ENCODE measurements at regions of chr17 and their contacts with region 1.

Region 1: DNA sequence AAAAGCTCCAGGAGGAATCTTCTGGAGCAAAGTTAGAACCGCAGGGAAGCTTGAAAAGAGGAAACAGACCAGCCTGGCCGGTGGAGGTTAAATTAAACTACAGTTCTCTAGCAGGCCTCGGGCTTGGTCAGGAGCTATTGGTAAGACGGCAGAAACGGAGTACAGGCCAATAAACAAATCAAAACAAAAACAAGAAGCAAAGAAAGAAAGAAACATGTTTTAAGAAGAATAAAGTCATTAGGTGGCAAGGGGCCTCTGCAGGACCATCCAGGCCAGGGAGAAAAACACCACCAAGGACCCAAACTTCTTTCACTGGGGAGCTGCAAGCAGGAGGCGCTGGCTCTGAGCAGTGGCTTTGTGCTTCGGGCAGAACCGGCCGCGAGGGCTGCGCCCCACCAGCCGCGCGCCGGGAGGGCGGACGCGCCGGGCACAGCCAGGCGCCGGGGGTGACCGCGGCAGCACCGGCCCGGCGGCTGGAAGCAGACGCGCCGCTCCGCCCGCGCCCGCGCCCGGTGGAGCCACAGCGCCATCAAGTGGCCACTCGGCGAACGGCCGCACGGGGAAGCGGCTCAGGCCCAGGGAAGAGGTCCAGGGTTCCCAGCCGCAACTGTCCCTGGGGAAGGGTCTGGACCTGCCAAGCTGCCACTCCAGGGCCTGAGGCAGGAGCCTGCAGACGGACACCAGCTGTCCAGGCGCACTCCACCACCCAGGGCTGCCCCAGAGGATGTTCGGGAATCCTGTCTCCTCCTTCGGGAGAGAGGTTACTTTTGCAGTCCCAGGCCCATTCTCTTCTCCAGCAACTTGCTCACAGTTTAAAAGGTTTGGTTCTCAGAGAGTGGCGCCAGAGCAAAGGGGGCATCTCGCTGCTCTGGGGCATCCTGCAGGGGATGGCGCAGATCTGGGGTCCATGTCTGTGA is 419.4 kb downstream of the SOX9 start:
- DNase-seq: peak; percentile 75 to 84 (median 80)
- ATAC-seq: peak; percentile 97
- H3K4me3 ChIP-seq: no peak overlapping the region
- H3K27ac ChIP-seq: peak overlapping the region in 3 of 4 donors; percentile 67 to 70 (median 70)
- H3K4me1 ChIP-seq: peaks cover 12% of the 10 kb centered on the region
- H3K27me3 ChIP-seq: no peaks in the 10 kb centered on the region
- CTCF ChIP-seq: peak; percentile 64 to 99 (median 98)
- POLR2A ChIP-seq: peak in 2 of 3 donors; percentile 23 to 26

Region 2: GRCh38 chr17:71118039-71118438 is 1422.2 kb before region 1 on chr17:
- intact Hi-C with region 1: loop called (anchors 10 kb)
- DNase-seq: peak; percentile 24 to 59 (median 42)
- ATAC-seq: peak; percentile 50
- H3K4me3 ChIP-seq: no peak overlapping the region
- H3K27ac ChIP-seq: no peak overlapping the region
- H3K4me1 ChIP-seq: no peaks in the 10 kb centered on the region
- H3K27me3 ChIP-seq: no peaks in the 10 kb centered on the region
- CTCF ChIP-seq: peak; percentile 25 to 86 (median 83)
- POLR2A ChIP-seq: no peak

Region 3: GRCh38 chr17:71472809-71473789 is 1067.1 kb before region 1 on chr17:
- intact Hi-C with region 1: loop called (anchors 5 kb)
- DNase-seq: peak; percentile 22 to 48 (median 34)
- ATAC-seq: peak; percentile 71
- H3K4me3 ChIP-seq: no peak overlapping the region
- H3K27ac ChIP-seq: no peak overlapping the region
- H3K4me1 ChIP-seq: peaks cover 5% of the 10 kb centered on the region
- H3K27me3 ChIP-seq: no peaks in the 10 kb centered on the region
- CTCF ChIP-seq: peak; percentile 53 to 81 (median 71)
- POLR2A ChIP-seq: no peak

Region 4: GRCh38 chr17:72120642-72121163 is 419.5 kb before region 1 on chr17 and contains the start of gene SOX9:
- intact Hi-C with region 1: loop called (anchors 10 kb)
- DNase-seq: peak; percentile 94 to 97 (median 96)
- ATAC-seq: peak; percentile 88
- H3K4me3 ChIP-seq: peak within 1 kb of the TSS; percentile 70 to 79
- H3K27ac ChIP-seq: peak within 1 kb of the TSS; percentile 86 to 96 (median 94)
- H3K4me1 ChIP-seq: peaks cover 39% of the 10 kb centered on the region
- H3K27me3 ChIP-seq: no peaks in the 10 kb centered on the region
- CTCF ChIP-seq: peak in 2 of 7 experiments; percentile 2 to 3
- POLR2A ChIP-seq: peak; percentile 97 to 99 (median 99)
- total RNA-seq, gene SOX9: 35.8 to 47.5 TPM

Region 5: GRCh38 chr17:72862276-72862999 is 322.2 kb after region 1 on chr17:
- intact Hi-C with region 1: no loop called
- DNase-seq: no peak
- ATAC-seq: no peak
- H3K4me3 ChIP-seq: no peak overlapping the region
- H3K27ac ChIP-seq: no peak overlapping the region
- H3K4me1 ChIP-seq: no peaks in the 10 kb centered on the region
- H3K27me3 ChIP-seq: no peaks in the 10 kb centered on the region
- CTCF ChIP-seq: no peak
- POLR2A ChIP-seq: no peak

Measured in body of pancreas (tissue), 4 donors.